SK-N-SH (cell line): ENCODE measurements at regions of chr11 and their contacts with region 1.

Region 1: GRCh38 chr11:122108192-122108799 is 7.7 kb downstream of the BLID start:
- DNase-seq: no peak
- H3K4me3 ChIP-seq: no peak overlapping the region; a peak in 1 of 4 replicates
- H3K27ac ChIP-seq: peak overlapping the region in 1 of 2 experiments; percentile 94; a peak in 2 of 4 replicates
- H3K4me1 ChIP-seq: peaks cover 8 to 70% of the 10 kb centered on the region in 2 experiments
- H3K27me3 ChIP-seq: no peaks in the 10 kb centered on the region
- CTCF ChIP-seq: peak; percentile 85
- EP300 ChIP-seq: no peak
- RAD21 ChIP-seq: peak; percentile 50

Region 2: GRCh38 chr11:122082213-122082612 is 26.1 kb before region 1 on chr11:
- CTCF ChIA-PET with region 1: no interaction called
- POLR2A ChIA-PET with region 1: no interaction called
- DNase-seq: no peak
- H3K4me3 ChIP-seq: no peak overlapping the region
- H3K27ac ChIP-seq: no peak overlapping the region
- H3K4me1 ChIP-seq: peaks cover 0 to 15% of the 10 kb centered on the region in 2 experiments; a peak in 3 of 4 replicates
- H3K27me3 ChIP-seq: no peaks in the 10 kb centered on the region
- CTCF ChIP-seq: no peak
- EP300 ChIP-seq: no peak
- RAD21 ChIP-seq: no peak

Region 3: DNA sequence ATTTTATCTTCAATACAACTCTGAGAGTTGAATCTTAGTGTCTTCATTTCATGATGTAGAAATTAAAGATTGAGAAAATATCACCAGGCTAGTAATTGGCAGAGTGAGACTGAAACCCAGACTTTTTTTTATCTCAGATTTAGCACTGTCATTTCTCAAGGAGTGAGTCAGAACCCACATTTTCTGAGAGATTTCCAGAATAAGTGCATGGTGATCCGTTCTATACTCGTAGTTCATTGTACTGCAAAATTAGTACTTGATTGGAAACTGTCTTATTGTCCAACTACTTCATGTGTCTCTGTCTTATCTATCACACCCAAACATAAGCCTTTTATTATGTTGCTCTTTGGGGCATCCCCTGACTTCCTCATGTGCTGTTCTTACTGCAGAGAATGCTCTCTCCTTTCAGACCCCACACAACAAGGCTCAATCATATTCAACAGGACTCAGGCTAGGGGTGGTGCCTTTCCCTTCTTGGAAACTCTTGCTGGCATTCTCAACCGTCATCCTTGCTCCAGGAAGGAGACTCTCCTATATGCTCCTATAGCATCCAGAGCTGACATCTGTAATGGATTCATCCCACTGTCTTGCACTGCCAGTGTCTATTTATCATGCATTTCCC is 84.4 kb after region 1 on chr11:
- CTCF ChIA-PET with region 1: interaction called, 11 read pairs
- POLR2A ChIA-PET with region 1: no interaction called
- DNase-seq: no peak
- H3K4me3 ChIP-seq: no peak overlapping the region
- H3K27ac ChIP-seq: peak overlapping the region; percentile 69 to 99
- H3K4me1 ChIP-seq: peaks cover 0 to 63% of the 10 kb centered on the region in 2 experiments
- H3K27me3 ChIP-seq: no peaks in the 10 kb centered on the region
- CTCF ChIP-seq: no peak
- EP300 ChIP-seq: peak in 1 of 2 experiments; percentile 59; a peak in 1 of 4 replicates
- RAD21 ChIP-seq: no peak